Heart left ventricle (tissue), 16 donors: ENCODE measurements at regions of chr2 and their contacts with region 1.

Region 1: DNA sequence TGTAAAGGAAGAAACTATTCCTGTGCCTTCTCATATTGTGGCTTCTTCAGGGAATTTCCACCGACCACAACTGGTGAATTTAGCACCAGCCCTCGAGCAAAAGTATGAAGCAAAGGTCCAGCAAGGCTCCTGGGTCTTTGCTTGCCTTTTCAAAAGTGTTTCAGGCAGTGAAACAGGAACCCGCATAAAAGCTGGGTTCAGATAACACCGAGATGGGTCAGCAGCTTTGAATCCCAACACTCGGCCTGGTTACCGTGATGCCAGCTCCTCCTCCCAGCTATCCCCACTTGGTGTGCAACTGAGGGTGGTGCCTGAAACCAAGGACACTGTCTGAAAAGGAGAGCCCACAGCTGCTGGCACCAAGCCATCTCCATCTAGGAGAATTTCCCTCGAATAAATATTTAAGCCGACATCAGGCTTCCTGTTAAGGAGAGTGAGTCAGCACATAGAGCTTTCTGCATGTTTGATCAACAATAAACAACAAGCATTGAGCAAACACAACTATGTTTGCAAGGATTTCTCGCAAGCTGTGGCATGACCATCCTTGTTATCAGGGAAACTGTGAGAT is 69.5 kb downstream of the ANTXR1 start:
- DNase-seq: peak; percentile 29 to 65 (median 41)
- ATAC-seq: peak in 3 of 4 donors; percentile 10 to 48 (median 33)
- H3K4me3 ChIP-seq: no peak overlapping the region
- H3K27ac ChIP-seq: peak overlapping the region in 6 of 12 donors; percentile 1 to 83 (median 26)
- H3K4me1 ChIP-seq: peaks cover 0 to 56% (median 16%) of the 10 kb centered on the region in 12 donors
- H3K27me3 ChIP-seq: no peaks in the 10 kb centered on the region
- CTCF ChIP-seq: no peak
- POLR2A ChIP-seq: no peak

Region 2: DNA sequence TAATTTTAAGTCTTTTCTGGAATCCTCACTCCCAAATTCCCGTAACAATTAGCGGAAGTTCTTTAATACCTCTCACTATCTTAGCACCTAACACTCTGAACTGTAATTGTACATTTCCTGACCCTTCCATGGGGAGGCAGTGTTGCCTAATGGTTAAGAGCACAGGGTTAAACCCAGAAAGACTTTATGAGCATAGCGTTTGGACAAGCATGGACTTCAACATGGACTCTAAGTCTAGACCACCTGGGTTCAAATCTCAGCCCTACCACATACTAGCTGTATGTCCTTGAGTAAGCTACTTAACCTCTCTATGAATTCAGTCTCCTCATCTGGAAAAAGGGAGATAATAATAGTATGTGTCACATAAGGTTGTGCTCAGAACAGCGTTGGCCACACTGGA is 56.5 kb before region 1 on chr2:
- intact Hi-C with region 1: loop called in 1 of 10 experiments (anchors 10 kb)
- DNase-seq: peak in 2 of 5 donors; percentile 27 to 34
- ATAC-seq: peak in 3 of 4 donors; percentile 81 to 89 (median 87)
- H3K4me3 ChIP-seq: no peak overlapping the region
- H3K27ac ChIP-seq: no peak overlapping the region
- H3K4me1 ChIP-seq: peaks cover 0 to 8% (median 1%) of the 10 kb centered on the region in 12 donors
- H3K27me3 ChIP-seq: no peaks in the 10 kb centered on the region
- CTCF ChIP-seq: peak; percentile 43 to 70 (median 58)
- POLR2A ChIP-seq: no peak